ENCODE measurements at regions of chr6 and their contacts with region 1.

Region 1: DNA sequence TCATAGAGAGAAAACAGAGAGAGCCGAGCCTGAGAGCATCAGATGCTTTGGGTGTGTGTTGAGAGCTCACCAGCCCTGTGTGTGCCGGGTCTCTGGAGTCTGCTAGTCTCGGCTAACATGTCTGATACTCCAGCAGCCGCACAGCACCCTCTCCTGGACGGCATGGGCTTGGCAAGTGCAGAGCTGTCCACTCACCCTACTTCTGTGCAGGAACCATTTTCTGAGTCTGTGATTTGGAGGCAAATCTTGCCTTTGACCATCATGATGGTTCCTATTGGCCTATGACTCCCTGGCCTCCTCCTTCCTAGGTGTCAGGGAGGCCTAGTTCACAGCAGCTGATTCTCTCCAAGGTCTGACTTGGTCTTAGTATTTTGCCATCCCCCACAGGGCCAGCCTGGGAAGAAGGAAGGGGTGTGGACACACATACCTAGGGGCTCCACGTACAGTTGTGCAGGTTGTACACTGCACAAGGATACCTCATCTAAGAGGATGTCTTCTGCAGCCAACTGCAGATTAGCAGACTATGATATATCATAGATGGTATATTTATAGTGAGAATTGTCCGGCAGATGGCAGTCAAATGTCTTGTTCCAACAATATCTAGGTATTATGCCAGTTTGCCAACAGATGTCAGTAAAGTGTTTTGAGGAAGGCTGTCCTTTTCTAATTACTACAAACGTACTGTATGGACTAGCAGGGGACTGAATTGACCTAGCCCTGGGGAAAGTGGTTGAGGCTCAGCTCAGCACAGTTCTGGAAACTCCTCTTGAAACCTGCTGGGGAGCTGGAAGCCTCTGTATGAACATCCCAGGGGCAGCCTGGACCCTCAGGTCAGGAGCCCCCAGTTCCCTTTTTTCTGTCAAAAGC is 13.0 kb downstream of the FGD2 start:
- DNase-seq: peak; percentile 81 to 92 (median 88)
- ATAC-seq: peak; percentile 94
- H3K4me3 ChIP-seq: no peak overlapping the region
- H3K4me3 Mint-ChIP-seq: no peak overlapping the region
- H3K27ac ChIP-seq: no peak overlapping the region
- H3K27ac Mint-ChIP-seq: peak overlapping the region; percentile 14
- H3K4me1 ChIP-seq: peaks cover 42% of the 10 kb centered on the region
- H3K4me1 Mint-ChIP-seq: peaks cover 42% of the 10 kb centered on the region
- H3K27me3 ChIP-seq: no peaks in the 10 kb centered on the region
- H3K27me3 Mint-ChIP-seq: no peaks in the 10 kb centered on the region
- CTCF ChIP-seq: peak; percentile 89

Region 2: DNA sequence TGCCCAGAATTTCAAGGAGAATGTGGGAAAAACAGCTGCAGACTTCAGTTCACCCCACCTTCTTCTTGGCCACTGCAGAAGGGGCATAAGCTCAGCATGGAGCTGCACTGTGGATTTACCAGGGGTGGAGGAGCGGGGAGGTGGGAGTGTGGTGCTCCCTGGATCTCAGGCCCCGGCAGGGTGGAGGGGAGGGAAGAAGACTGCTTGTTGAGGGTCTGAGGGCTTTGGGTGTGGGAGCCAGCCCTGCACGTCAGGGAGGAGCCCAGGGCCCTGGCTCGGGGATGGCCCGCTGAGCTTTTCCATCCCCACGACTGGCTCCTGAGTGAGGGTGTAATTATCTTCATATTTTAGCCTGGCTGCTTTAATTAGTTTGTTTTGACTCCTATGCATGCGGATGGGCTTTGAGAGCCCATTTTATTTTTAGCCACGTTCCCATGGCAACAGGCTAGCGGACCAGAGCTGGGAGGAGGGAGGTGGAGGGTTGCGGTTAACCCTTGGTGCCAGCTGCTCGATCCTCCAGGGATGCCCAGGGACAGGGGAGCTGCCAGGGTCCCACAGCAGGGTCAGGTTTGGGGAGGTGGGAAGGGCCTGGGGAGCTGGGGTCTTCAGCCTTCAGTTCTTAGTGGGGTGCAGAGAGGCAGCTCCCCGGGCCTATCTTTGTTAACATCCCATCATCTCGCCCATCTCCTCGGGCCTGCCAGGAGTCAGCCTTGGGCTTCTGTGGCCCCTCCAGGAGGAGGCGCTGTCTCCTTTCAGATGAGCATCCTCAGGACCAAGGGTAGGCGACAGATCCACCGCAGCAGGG is 252.6 kb before region 1 on chr6:
- CTCF ChIA-PET with region 1: interaction called, 18 read pairs
- POLR2A ChIA-PET with region 1: interaction called, 5 read pairs
- intact Hi-C with region 1: loop called (anchors 1 kb)
- DNase-seq: peak; percentile 68 to 89 (median 76)
- ATAC-seq: peak; percentile 93
- H3K4me3 ChIP-seq: no peak overlapping the region
- H3K4me3 Mint-ChIP-seq: peak overlapping the region; percentile 18
- H3K27ac ChIP-seq: no peak overlapping the region
- H3K27ac Mint-ChIP-seq: peak overlapping the region; percentile 47
- H3K4me1 ChIP-seq: peaks cover 49% of the 10 kb centered on the region
- H3K4me1 Mint-ChIP-seq: peaks cover 34% of the 10 kb centered on the region
- H3K27me3 ChIP-seq: no peaks in the 10 kb centered on the region
- H3K27me3 Mint-ChIP-seq: no peaks in the 10 kb centered on the region
- CTCF ChIP-seq: peak; percentile 63

Region 3: DNA sequence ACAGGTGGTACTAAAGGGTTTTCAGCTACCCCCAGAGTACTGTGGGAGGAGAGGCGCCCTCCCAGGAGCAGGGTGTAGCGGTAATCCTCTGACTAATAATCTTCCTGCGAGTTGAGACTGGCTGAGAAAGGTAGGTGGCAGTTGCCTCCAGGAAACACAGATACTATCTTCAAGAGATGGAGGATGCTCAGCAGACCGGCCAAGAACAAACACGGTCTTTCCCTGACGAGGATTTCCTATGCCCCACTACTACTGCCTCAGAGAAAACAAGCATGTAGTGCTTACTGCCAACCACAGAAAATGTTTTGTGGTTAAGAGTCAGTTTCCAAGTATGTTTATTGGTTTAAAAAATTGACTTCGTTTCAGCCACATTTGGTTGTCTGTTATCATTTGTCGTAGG is 105.8 kb before region 1 on chr6:
- CTCF ChIA-PET with region 1: interaction called, 5 read pairs
- POLR2A ChIA-PET with region 1: interaction called, 4 read pairs
- intact Hi-C with region 1: loop called (anchors 1 to 5 kb)
- DNase-seq: peak; percentile 19 to 89 (median 49)
- ATAC-seq: peak; percentile 92
- H3K4me3 ChIP-seq: peak overlapping the region; percentile 23
- H3K4me3 Mint-ChIP-seq: peak overlapping the region; percentile 64
- H3K27ac ChIP-seq: peak overlapping the region; percentile 32 to 50
- H3K27ac Mint-ChIP-seq: peak overlapping the region; percentile 82
- H3K4me1 ChIP-seq: peaks cover 38% of the 10 kb centered on the region
- H3K4me1 Mint-ChIP-seq: peaks cover 36% of the 10 kb centered on the region
- H3K27me3 ChIP-seq: no peaks in the 10 kb centered on the region
- H3K27me3 Mint-ChIP-seq: no peaks in the 10 kb centered on the region
- CTCF ChIP-seq: no peak

Region 4: DNA sequence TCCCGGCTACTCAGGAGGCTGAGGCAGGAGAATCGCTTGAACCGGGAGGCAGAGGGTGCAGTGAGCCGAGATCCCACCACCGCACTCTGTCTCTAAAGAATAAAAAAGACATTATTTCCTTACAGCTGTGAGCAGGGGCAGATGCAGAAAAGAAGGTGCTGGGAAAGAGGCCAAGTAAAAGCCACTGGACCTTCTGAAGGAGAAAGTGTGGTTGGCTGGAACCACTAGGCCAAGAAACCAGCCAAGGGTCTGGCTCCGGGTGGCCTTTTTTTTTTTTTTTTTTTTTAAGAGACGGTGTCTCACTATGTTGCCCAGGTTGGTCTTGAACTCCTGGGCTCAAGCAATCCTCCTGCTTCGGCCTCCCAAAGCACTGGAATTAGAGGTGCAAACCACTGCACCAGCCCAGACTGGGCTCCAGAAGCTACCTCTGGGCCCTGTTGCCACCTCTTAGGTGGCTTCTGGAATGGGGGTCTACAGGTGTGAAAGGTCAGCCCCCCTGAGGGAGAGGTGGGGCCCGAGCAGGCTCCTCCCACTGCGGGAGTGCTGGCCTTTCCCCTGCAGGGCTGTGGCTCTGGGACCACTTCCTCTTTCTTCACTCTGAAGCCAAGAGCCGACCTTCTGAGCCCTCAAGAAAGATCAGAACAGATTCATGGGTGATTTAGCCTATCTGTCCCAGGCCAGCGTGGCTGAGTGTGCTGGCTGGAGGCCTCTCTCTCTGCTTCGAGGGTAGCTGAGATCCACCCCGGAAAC is 13.2 kb before region 1 on chr6 and contains the start of gene FGD2:
- CTCF ChIA-PET with region 1: interaction called, 11 read pairs
- POLR2A ChIA-PET with region 1: interaction called, 4 read pairs
- intact Hi-C with region 1: no loop called
- DNase-seq: peak in 2 of 14 experiments; percentile 7 to 45
- ATAC-seq: no peak
- H3K4me3 ChIP-seq: peak within 1 kb of the TSS; percentile 49
- H3K4me3 Mint-ChIP-seq: peak within 1 kb of the TSS; percentile 62
- H3K27ac ChIP-seq: no peak within 1 kb of the TSS
- H3K27ac Mint-ChIP-seq: peak within 1 kb of the TSS; percentile 2
- H3K4me1 ChIP-seq: peaks cover 25% of the 10 kb centered on the region
- H3K4me1 Mint-ChIP-seq: peaks cover 11% of the 10 kb centered on the region
- H3K27me3 ChIP-seq: no peaks in the 10 kb centered on the region
- H3K27me3 Mint-ChIP-seq: no peaks in the 10 kb centered on the region
- CTCF ChIP-seq: no peak
- total RNA-seq, gene FGD2: 1.2 TPM

Region 5: GRCh38 chr6:37169496-37170272 is 151.3 kb after region 1 on chr6 and contains the start of gene PIM1:
- CTCF ChIA-PET with region 1: interaction called, 123 read pairs
- POLR2A ChIA-PET with region 1: interaction called, 164 read pairs
- intact Hi-C with region 1: loop called (anchors 1 kb)
- DNase-seq: peak; percentile 98 to 100 (median 100)
- ATAC-seq: peak; percentile 77
- H3K4me3 ChIP-seq: peak within 1 kb of the TSS; percentile 93
- H3K4me3 Mint-ChIP-seq: peak within 1 kb of the TSS; percentile 95
- H3K27ac ChIP-seq: peak within 1 kb of the TSS; percentile 57 to 77
- H3K27ac Mint-ChIP-seq: peak within 1 kb of the TSS; percentile 95
- H3K4me1 ChIP-seq: peaks cover 36% of the 10 kb centered on the region
- H3K4me1 Mint-ChIP-seq: peaks cover 44% of the 10 kb centered on the region
- H3K27me3 ChIP-seq: no peaks in the 10 kb centered on the region
- H3K27me3 Mint-ChIP-seq: no peaks in the 10 kb centered on the region
- CTCF ChIP-seq: no peak
- total RNA-seq, gene PIM1: 175 to 183 TPM

Region 6: DNA sequence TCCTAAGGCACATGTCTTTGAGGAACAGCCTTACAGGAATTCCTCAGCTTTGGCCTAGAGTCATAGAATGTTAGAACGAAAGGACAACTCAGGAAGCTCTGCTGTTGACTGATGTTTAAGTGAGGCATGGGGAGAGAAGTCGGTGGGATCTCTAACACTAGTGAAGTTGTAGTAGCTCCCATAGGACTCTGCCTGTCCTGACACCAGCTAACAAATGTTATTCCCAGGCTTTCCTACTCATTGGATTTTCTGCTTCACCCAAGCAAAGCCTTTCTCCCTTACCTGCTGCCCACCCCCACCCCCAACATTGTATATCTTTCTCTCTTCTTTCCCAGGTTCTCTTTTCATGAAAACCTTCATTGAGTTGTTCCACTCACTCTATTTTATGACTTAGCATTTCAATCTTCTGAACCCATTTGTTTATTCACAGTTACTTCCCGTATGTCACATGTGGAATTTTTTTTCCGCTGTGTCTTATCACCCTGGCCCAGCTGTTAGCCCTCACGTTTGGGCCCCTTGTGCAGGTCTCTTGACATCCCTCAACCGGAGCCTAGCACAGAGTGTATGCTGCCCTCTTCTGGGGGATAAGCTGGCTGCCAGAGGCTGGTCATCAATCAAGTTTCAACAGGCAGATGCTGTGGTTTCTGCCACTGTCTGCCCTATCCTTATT is 296.2 kb after region 1 on chr6:
- CTCF ChIA-PET with region 1: interaction called, 5 read pairs
- POLR2A ChIA-PET with region 1: no interaction called
- intact Hi-C with region 1: loop called (anchors 5 to 10 kb)
- DNase-seq: peak in 9 of 14 experiments; percentile 1 to 56 (median 34)
- ATAC-seq: peak; percentile 49
- H3K4me3 ChIP-seq: no peak overlapping the region
- H3K4me3 Mint-ChIP-seq: no peak overlapping the region
- H3K27ac ChIP-seq: no peak overlapping the region
- H3K27ac Mint-ChIP-seq: no peak overlapping the region
- H3K4me1 ChIP-seq: no peaks in the 10 kb centered on the region
- H3K4me1 Mint-ChIP-seq: peaks cover 5% of the 10 kb centered on the region
- H3K27me3 ChIP-seq: no peaks in the 10 kb centered on the region
- H3K27me3 Mint-ChIP-seq: no peaks in the 10 kb centered on the region
- CTCF ChIP-seq: peak; percentile 46